Naive thymus-derived CD4-positive, alpha-beta T cell (primary cell): ENCODE measurements at regions of chr4 and their contacts with region 1.

Region 1: DNA sequence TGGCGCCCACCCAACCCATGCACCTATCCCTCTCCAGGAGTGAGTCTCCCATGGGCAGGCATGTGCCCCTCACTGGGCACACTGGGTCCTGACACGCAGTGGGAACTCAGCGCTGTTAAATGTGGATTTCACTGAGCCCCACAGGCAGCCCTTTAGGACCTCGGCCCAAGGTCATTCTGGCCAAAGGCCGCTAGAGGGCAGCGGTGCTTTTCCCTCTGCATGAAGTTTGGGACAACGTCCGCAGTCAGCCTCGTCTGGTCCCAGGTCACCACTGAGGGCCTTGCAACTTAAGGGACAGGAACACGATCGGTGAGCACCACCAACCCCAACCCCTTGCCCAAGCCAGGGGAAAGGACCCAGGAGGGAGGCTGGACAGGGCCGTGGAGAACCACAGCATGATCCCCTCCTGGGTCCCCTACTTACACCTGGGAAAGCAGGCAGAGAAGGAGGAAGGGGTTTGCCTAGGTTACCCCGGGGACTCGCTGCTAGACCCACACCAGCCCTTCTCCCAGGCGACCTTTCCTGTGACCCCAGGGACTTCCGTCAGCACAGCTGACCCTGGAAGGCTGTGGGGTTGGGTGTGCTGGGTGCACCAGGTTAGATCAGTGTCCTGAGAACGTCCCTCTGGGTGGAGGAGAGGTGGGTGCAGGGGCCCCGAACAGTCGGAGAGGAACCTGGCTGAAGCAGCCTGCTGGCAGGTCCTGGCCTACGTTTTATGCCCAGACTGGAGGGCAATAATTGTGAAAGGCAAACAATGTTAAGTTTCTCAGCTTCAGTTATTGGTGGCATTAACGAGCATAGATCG is 24.0 kb downstream of the CYTL1 start:
- DNase-seq: peak in 4 of 9 donors; percentile 18 to 42 (median 19)
- ATAC-seq: peak; percentile 72
- H3K4me3 ChIP-seq: no peak overlapping the region
- H3K4me3 Mint-ChIP-seq: no peak overlapping the region
- H3K27ac ChIP-seq: no peak overlapping the region
- H3K27ac Mint-ChIP-seq: no peak overlapping the region
- H3K4me1 ChIP-seq: no peaks in the 10 kb centered on the region
- H3K4me1 Mint-ChIP-seq: peaks cover 0 to 3% (median 0%) of the 10 kb centered on the region in 7 donors
- H3K27me3 ChIP-seq: no peaks in the 10 kb centered on the region
- H3K27me3 Mint-ChIP-seq: peaks cover 0 to 29% (median 14%) of the 10 kb centered on the region in 5 donors

Region 2: DNA sequence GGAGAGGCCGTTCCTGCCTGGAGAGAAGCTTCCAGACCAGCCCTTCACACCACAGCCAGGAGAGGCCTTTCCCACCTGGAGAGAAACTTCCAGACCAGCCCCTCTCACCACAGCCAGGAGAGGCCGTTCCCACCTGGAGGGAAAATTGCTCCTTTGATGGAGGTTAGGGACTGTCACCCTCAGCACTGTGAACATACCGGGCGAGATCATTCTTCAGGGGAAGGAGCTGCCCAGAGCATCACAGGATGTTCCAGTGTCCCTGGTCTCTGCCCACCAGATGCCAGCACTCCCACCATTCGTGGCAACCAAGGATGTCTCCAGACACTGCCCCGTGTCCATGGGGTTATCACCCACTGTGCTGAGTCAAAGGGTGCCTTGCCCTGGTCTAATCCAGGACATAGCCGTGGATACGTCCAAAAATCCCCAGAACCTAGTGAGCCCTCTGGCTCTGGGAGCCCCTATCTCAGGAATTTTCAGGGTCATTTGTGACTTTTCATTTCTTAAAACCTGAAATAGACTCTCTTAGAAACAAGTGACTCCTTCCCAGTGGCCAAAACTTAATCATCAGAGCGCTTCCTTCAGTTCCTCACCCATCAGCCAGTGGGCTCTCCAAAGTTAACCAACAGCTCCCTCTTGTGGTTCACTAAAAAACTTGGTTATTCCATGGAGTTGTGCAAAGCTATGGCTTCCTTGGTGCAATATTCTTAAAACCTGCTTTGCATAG is 817.4 kb after region 1 on chr4:
- CTCF ChIA-PET with region 1: interaction called, 4 read pairs
- POLR2A ChIA-PET with region 1: no interaction called
- intact Hi-C with region 1: loop called in 1 of 2 experiments (anchors 1 kb)
- DNase-seq: peak in 4 of 9 donors; percentile 13 to 32 (median 14)
- ATAC-seq: peak; percentile 51
- H3K4me3 ChIP-seq: no peak overlapping the region
- H3K4me3 Mint-ChIP-seq: no peak overlapping the region
- H3K27ac ChIP-seq: no peak overlapping the region
- H3K27ac Mint-ChIP-seq: no peak overlapping the region
- H3K4me1 ChIP-seq: no peaks in the 10 kb centered on the region
- H3K4me1 Mint-ChIP-seq: no peaks in the 10 kb centered on the region
- H3K27me3 ChIP-seq: no peaks in the 10 kb centered on the region
- H3K27me3 Mint-ChIP-seq: peaks cover 0 to 11% (median 0%) of the 10 kb centered on the region in 5 donors